Kidney (tissue), 22 donors: ENCODE measurements at regions of chr2 and their contacts with region 1.

Region 1: DNA sequence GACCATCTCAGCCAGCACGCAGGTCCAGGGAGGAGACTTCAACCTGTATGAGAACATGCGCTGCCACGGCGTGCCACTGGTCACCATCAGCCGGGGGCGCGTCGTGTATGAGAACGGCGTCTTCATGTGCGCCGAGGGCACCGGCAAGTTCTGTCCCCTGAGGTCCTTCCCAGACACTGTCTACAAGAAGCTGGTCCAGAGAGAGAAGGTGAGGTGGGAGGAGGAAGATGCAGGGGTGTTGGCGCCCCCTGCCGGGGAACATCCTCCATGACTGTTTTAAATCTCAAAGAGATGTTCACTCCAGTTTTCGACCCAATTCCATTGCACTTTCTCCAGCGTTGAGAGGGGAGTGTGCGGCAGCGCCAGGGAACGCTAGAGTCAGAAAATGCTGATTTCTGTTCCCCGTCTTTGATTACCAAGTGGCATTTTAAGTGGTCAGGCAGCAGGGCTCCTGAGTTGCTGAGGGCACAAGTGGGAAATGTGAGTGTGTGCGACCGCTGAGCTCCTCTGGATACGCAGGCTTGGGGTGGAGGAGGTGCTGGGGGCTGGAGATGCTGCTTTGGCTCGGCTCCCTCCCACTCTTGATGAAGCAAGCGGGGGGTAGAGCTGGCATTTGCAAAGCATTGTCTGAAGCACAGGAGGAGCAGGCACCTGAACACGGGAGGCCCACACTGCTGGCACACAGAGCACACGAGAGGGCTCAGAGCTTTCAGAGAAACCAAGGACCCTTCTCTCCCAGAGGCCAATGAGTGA is 27.7 kb upstream of the MAPRE3 start:
- DNase-seq: peak; percentile 63 to 79 (median 77)
- H3K4me3 ChIP-seq: no peak overlapping the region
- H3K27ac ChIP-seq: no peak overlapping the region
- H3K4me1 ChIP-seq: no peaks in the 10 kb centered on the region
- H3K27me3 ChIP-seq: no peaks in the 10 kb centered on the region
- CTCF ChIP-seq: peak; percentile 77

Region 2: DNA sequence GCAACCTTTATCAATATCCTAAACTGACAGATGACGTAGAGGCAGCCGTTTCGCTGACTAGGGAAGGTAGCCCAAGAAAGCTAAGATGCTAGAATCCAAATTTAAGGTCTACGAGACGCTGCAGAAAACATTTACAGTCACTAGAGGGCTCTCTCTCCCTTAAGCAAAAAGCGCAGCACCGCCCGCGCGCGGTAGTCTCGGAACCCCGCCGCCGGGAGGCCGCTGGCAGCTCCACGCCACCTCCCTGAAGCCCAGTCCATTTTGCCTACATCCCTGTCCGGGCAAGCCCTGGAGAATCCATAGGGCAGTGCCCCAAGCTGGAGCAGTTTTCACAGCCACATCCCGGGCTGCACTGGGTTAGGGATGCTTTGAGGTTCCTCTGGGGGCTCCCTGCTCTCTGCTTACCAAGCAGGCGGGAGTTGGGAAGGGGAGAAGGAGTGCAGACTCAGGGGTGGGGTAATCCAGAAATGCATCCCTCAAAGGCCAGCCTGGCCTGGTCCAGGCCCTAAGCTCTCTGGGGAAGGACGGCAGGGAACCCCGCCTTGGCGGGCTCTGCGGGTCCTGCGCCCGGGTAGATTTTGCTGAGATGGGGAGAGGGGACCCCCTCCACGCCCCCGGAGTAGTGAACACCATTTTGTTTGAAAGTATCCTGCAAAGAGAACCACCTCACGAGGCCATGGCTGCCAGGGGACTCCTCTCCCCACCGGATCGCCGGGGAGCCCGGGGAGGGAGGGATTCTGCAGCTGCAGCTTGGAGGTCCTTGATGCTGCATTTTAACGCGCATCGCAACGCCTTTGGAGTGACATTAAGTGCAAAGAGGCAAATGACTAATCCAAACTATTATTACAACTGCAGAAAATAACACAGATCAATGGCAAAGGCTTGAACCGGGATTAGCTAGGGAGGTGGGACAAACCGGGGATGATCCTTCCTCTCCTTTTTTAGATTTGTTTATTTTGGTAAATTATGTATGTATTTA is 96.1 kb before region 1 on chr2:
- intact Hi-C with region 1: loop called (anchors 10 kb)
- DNase-seq: peak; percentile 76 to 88 (median 80)
- H3K4me3 ChIP-seq: no peak overlapping the region
- H3K27ac ChIP-seq: no peak overlapping the region
- H3K4me1 ChIP-seq: peaks cover 0 to 6% (median 0%) of the 10 kb centered on the region in 3 donors
- H3K27me3 ChIP-seq: peaks cover 21% of the 10 kb centered on the region
- CTCF ChIP-seq: peak; percentile 89

Region 3: DNA sequence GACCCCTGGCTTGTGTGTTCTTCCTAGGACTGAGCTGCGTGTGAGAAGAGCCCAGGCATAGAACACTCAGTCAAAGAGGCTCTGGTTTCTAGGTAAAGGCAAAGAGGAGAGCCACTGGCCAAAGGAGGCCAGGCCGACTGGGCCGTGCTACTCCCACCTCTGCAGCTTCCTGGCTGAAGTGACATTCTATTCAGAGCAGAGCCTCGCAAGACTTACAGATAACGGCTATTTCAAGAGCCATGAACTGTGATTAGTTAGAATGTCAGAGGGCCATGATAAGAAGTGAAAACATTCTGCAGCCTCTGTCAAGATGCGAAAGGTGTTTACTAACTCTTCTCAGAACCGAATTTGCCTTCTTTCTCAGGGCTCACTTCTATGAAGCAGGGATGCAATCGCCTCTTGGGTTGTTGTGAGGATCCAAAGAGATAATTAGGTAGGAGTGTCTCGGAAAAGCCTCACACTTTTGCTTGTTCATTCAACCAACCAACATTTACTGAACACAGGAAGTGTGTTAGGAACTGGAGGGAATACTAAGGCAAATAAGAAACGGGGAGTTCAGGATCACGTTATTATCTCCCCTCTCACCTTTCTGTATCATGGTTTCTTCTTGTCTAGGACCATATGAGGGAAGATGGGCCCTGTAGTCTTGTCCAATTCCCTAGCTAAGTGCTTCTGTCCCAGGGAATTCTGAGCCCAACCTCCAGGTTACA is 329.1 kb after region 1 on chr2:
- intact Hi-C with region 1: loop called (anchors 10 kb)
- DNase-seq: no peak
- H3K4me3 ChIP-seq: no peak overlapping the region
- H3K27ac ChIP-seq: no peak overlapping the region
- H3K4me1 ChIP-seq: no peaks in the 10 kb centered on the region
- H3K27me3 ChIP-seq: peaks cover 2% of the 10 kb centered on the region
- CTCF ChIP-seq: no peak